Right lobe of liver (tissue), 6 donors: ENCODE measurements at regions of chr12 and their contacts with region 1.

Region 1: DNA sequence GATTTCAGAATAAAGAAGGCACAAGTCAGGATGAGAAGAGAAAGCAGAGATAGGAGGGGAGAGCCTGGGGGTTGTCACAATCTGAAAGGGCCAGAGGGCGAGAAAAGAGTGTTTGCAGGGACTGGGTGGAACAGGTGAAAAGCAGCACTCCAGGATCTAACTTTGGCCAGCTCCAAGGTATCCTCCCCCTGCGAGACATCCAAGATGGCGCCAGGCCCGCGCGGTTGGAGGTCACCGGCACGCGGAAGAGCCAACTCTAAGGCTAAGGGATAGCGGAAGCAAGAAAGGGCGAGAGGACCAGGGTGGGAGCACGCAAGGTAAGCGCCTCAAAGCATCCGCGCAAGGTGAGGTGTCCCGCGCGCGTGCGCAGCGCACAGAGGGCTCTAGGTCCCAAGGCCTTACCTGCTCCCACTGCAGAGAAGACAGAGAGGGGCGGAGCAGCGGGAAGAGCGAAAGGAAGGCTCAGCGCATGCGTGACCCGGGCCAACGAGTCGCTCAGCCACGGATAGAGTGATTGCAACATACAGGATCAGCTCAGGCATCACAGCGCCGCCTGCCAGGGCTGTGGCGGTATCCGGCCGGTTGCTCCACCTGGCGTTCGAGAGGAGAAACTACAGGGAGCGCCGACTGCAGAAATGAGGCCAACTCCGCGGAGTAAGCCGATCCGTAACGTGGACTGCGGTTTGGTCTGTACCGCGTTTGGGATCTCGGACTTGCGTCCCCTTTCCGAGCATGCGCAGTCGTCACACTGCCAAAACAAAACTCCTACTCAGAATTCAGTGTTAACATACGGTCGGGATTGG is at the start of gene ATP5MC2:
- DNase-seq: peak; percentile 96 to 98 (median 98)
- ATAC-seq: peak; percentile 94 to 98 (median 96)
- H3K4me3 ChIP-seq: peak within 1 kb of the TSS; percentile 64 to 88 (median 83)
- H3K27ac ChIP-seq: peak within 1 kb of the TSS; percentile 82 to 92 (median 90)
- H3K4me1 ChIP-seq: peaks cover 0 to 8% (median 0%) of the 10 kb centered on the region in 4 donors
- H3K27me3 ChIP-seq: no peaks in the 10 kb centered on the region
- CTCF ChIP-seq: peak; percentile 98 to 100 (median 99)
- POLR2A ChIP-seq: peak; percentile 62
- total RNA-seq, gene ATP5MC2: 122 to 160 (median 135) TPM

Region 2: DNA sequence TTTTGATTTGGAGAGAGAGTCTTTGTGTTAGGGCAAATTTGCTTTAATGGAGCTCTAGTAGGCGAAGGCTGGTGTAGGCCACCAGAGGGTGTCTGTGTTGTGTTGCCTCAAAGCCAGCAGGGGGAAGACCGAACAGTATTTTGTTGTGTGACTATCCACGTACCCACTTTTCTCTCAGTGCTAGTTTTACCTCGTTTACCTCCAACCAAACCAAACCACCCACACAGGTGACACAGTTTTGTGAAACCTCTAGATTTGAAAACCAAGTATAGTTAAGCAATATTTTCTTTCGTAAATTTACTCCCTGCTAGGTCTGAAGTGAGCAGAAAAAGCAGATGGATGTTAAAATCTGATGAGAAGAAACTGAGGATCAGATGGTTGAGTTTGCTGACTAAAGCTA is 132.3 kb before region 1 on chr12:
- intact Hi-C with region 1: loop called in 1 of 2 experiments (anchors 10 kb)
- DNase-seq: peak in 2 of 3 donors; percentile 34 to 58
- ATAC-seq: peak; percentile 81 to 93 (median 90)
- H3K4me3 ChIP-seq: no peak overlapping the region
- H3K27ac ChIP-seq: peak overlapping the region in 2 of 3 donors; percentile 9 to 49
- H3K4me1 ChIP-seq: peaks cover 0 to 34% (median 11%) of the 10 kb centered on the region in 4 donors
- H3K27me3 ChIP-seq: no peaks in the 10 kb centered on the region
- CTCF ChIP-seq: peak; percentile 77 to 92 (median 82)
- POLR2A ChIP-seq: no peak

Region 3: GRCh38 chr12:53907103-53907502 is 231.3 kb after region 1 on chr12:
- intact Hi-C with region 1: no loop called
- DNase-seq: no peak
- ATAC-seq: no peak
- H3K4me3 ChIP-seq: no peak overlapping the region
- H3K27ac ChIP-seq: no peak overlapping the region
- H3K4me1 ChIP-seq: no peaks in the 10 kb centered on the region
- H3K27me3 ChIP-seq: no peaks in the 10 kb centered on the region
- CTCF ChIP-seq: no peak
- POLR2A ChIP-seq: no peak